A549 (cell line): ENCODE measurements at regions of chr6 and their contacts with region 1.

Region 1: DNA sequence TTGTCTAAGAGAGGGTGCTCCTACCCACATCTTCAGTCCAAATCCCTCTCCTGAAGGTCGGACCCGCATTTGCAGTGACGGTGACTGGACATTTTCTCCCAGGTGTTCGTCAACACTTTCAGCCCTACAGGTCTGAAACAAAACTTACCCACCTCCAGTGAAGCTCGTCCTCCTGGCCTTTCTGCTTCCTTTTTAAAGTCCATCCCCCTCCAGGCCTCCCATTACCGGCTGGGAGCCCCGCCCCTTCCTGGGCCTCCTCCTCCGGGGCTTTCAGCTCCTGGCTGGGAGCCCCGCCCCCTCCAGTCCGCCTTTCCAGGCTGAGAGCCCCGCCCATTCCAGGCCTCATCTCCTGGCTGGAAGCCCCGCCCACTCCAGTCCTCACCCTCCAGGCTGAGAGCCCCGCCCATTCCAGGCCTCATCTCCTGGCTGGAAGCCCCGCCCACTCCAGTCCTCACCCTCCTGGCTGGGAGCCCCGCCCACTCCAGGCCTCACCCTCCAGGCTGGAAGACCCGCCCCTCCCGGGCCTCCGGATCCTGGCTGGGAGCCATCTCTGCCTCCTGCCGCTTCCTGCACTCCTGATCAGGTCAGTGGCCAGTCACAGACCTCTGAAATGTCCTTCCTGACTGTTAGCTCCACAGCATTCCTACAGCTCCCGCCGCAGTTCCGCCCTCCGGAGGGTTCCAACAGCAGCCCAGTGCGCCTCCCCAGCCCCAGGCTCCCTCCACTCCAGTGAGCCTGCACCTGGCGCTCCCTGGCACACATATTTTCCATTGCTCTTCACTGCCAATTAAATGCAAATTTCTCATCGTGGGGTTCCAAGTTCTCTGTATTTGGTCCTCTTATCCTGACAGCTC is 98.5 kb downstream of the LY86 start:
- DNase-seq: peak; percentile 88 to 95
- ATAC-seq: peak; percentile 93 to 95
- H3K4me3 ChIP-seq: peak overlapping the region; percentile 53
- H3K27ac ChIP-seq: peak overlapping the region; percentile 79 to 89
- H3K4me1 ChIP-seq: peaks cover 25% of the 10 kb centered on the region
- CTCF ChIP-seq: no peak
- EP300 ChIP-seq: no peak
- POLR2A ChIP-seq: peak; percentile 65
- RAD21 ChIP-seq: no peak

Region 2: DNA sequence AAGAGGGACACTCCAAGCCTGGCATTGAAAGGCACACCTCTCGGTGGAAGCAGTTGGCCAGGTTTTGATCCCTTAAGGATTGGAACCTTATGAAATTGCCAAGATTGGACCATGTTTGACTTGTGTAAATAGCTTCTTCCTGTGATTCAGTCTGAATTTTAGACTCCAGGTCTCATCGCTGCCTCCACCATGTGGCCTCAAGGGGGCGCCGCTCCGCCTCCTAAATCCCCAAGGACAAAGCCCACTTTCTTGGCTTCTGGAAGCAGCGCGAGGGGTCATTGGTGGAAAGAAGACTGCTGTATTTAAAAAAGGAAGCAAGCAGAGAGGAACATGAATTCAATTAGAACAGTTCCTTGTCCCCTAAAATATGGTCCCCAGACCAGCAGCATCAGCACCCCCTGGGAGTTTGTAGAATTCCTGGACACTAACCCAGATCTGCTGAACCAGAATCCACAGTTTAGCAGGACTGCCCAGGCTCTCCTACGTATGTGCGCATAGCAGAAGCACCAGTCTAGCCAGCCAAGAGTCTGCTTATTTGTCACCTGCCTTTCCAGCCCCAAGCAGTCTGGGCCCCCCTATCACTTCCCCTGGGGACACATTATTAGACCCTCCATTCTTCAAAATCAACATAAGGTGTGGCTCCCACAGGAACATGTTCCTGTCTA is 10.0 kb after region 1 on chr6:
- CTCF ChIA-PET with region 1: interaction called, 8 read pairs
- POLR2A ChIA-PET with region 1: interaction called, 15 read pairs
- DNase-seq: peak; percentile 33 to 73
- ATAC-seq: peak; percentile 25 to 75; a peak in 3 of 6 replicates
- H3K4me3 ChIP-seq: no peak overlapping the region
- H3K27ac ChIP-seq: no peak overlapping the region; a peak in 1 of 6 replicates
- H3K4me1 ChIP-seq: peaks cover 18% of the 10 kb centered on the region
- CTCF ChIP-seq: peak; percentile 52
- EP300 ChIP-seq: no peak
- POLR2A ChIP-seq: no peak
- RAD21 ChIP-seq: peak; percentile 42 to 60; a peak in 4 of 5 replicates